Activated T-helper 2 cell treated with anti-CD3 and anti-CD28 coated beads, Interferon-gamma antibody, Interleukin-2, Interleukin-4, amounts not matched to agents 10 μg/mL and 5 μg/mL and 100 μg/mL, durations not matched to agents 14 hours and 24 hours and 36 hours (primary cell): ENCODE measurements at regions of chr6 and their contacts with region 1.

Region 1: DNA sequence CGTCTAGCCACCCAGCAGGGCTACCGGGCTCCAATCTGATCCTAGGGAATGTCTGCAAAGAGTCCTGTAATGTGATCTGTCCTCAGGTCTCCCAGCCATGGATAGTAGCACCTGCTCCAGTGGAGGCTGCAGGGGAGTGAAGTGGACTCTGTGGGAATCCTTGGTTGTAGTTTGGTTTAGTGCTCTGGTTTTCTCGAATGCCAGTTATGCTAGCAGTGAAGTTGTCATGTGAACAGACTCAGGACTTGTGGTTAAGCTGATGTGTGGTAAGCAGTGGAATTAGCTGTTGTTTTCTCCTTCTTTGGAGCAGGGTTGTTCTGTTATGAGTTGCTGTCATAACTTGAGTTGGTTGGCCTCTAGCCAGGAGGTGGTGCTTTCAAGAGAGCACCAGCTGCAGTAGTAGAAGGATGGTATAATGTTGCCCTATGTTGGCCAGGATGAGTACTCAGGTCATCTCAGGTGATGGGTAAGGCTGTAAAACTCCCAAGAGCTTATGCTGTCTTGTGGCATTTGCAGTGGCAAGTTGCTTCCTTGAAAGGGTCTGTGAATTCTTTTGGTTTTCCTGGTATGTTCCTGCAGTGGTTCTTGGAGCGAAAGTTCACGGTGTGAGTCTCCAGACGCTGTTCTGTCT is 390.2 kb downstream of the UTRN start:
- DNase-seq: peak; percentile 27
- H3K4me3 Mint-ChIP-seq: peak overlapping the region; percentile 26
- H3K27ac Mint-ChIP-seq: peak overlapping the region; percentile 69
- H3K4me1 Mint-ChIP-seq: peaks cover 32% of the 10 kb centered on the region
- H3K27me3 Mint-ChIP-seq: no peaks in the 10 kb centered on the region

Region 2: DNA sequence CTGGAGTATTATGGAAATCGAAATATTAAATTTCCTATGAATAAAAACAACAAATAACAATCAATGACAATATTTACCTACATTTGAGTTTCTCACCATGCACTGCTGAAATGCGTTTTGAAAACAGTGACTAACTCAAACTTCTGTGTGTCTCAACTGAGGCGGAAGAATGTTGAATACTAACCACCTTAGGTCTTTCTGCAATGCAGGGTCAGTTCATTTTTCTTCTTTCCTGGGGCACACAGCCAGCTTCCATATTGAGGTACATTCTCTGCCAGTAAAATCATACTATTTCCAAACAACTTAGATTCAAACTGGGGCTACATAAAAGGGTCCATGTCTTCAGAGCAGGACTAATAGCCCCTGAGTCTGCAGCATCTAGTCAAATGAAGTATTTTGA is 80.1 kb before region 1 on chr6:
- intact Hi-C with region 1: loop called (anchors 5 kb)
- DNase-seq: no peak
- H3K4me3 Mint-ChIP-seq: no peak overlapping the region
- H3K27ac Mint-ChIP-seq: no peak overlapping the region
- H3K4me1 Mint-ChIP-seq: peaks cover 33% of the 10 kb centered on the region
- H3K27me3 Mint-ChIP-seq: no peaks in the 10 kb centered on the region

Region 3: GRCh38 chr6:144659202-144660182 is 15.9 kb before region 1 on chr6:
- intact Hi-C with region 1: loop called (anchors 2 kb)
- DNase-seq: no peak
- H3K4me3 Mint-ChIP-seq: peak overlapping the region; percentile 9
- H3K27ac Mint-ChIP-seq: peak overlapping the region; percentile 74
- H3K4me1 Mint-ChIP-seq: peaks cover 28% of the 10 kb centered on the region
- H3K27me3 Mint-ChIP-seq: no peaks in the 10 kb centered on the region

Region 4: GRCh38 chr6:144715344-144715743 is 40.0 kb after region 1 on chr6:
- intact Hi-C with region 1: loop called (anchors 1 kb)
- DNase-seq: no peak
- H3K4me3 Mint-ChIP-seq: no peak overlapping the region
- H3K27ac Mint-ChIP-seq: peak overlapping the region; percentile 64
- H3K4me1 Mint-ChIP-seq: peaks cover 25% of the 10 kb centered on the region
- H3K27me3 Mint-ChIP-seq: no peaks in the 10 kb centered on the region

Region 5: DNA sequence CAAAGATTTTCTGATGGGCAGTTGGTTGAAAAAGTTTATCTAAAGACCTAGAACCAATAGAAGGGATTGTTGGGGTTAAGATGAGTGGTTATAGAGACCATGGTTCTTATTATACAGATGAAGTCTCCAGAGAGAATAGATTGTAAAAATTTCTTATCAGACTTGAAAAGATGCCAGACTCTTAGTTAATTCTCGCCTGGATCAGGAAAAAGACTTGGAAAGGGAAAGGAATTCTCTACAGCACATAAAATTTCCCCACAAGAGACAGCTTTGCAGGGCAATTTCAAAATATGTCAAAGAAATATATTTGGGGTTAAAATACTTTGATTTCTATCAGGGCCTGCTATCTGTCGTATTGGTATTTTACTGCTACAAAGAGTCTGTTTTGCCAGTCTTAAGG is 192.4 kb after region 1 on chr6:
- intact Hi-C with region 1: no loop called
- DNase-seq: no peak
- H3K4me3 Mint-ChIP-seq: no peak overlapping the region
- H3K27ac Mint-ChIP-seq: no peak overlapping the region
- H3K4me1 Mint-ChIP-seq: peaks cover 4% of the 10 kb centered on the region
- H3K27me3 Mint-ChIP-seq: peaks cover 12% of the 10 kb centered on the region